Panc1 (cell line): ENCODE measurements at regions of chr14 and their contacts with region 1.

Region 1: DNA sequence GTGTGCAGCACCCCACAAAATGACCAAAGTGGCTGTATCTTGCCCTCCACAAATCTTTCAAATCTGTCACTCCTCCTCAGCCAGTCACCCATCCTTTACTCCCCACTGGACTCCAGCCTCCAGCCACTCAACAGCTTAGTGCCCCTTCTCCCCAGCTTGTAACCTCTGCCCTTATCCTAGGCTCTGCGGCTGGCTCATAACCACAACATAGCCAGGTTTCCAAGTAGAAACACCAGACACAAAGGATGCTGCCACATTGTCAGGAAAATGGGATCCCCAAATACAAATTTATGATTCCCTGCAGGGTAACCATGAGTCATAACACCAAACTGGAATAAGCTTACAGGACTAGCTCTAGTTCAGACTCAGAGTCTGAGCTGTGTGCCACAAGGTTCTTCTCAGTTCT is 15.1 kb downstream of the OXA1L start:
- DNase-seq: no peak
- ATAC-seq: no peak
- H3K4me3 ChIP-seq: no peak overlapping the region
- H3K27ac ChIP-seq: no peak overlapping the region
- H3K4me1 ChIP-seq: no peaks in the 10 kb centered on the region
- H3K27me3 ChIP-seq: no peaks in the 10 kb centered on the region
- CTCF ChIP-seq: no peak

Region 2: GRCh38 chr14:22794551-22794951 is 13.0 kb after region 1 on chr14:
- CTCF ChIA-PET with region 1: no interaction called
- POLR2A ChIA-PET with region 1: no interaction called
- in situ Hi-C with region 1: no loop called
- intact Hi-C with region 1: no loop called
- DNase-seq: no peak
- ATAC-seq: no peak
- H3K4me3 ChIP-seq: no peak overlapping the region
- H3K27ac ChIP-seq: no peak overlapping the region
- H3K4me1 ChIP-seq: no peaks in the 10 kb centered on the region
- H3K27me3 ChIP-seq: no peaks in the 10 kb centered on the region; the same call in 1 of the 2 replicates
- CTCF ChIP-seq: no peak

Region 3: DNA sequence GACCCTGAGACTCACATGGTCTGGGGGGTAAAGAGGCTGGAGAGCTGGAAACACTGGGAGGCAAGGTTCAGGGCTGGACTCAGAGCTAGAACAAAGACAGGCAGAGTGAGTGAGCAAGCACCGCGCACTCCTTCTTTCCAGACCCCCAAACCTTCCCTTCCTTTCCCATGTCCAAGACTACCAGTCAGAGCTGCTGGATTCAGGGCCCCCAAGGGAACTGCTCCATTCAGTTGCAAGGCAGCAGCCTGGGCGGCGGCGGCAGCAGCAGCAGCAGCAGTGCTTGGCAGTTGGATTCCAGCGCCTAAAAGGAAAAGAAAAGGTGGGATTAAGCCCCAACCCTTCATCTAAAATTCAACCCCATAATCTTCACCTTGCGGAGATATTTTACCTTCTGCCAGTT is 120.2 kb after region 1 on chr14:
- CTCF ChIA-PET with region 1: interaction called, 16 read pairs
- POLR2A ChIA-PET with region 1: no interaction called
- in situ Hi-C with region 1: no loop called
- intact Hi-C with region 1: no loop called
- DNase-seq: no peak
- ATAC-seq: no peak
- H3K4me3 ChIP-seq: no peak overlapping the region
- H3K27ac ChIP-seq: no peak overlapping the region
- H3K4me1 ChIP-seq: no peaks in the 10 kb centered on the region
- H3K27me3 ChIP-seq: no peaks in the 10 kb centered on the region
- CTCF ChIP-seq: no peak